SK-N-SH (cell line): ENCODE measurements at regions of chr16 and their contacts with region 1.

Region 1: DNA sequence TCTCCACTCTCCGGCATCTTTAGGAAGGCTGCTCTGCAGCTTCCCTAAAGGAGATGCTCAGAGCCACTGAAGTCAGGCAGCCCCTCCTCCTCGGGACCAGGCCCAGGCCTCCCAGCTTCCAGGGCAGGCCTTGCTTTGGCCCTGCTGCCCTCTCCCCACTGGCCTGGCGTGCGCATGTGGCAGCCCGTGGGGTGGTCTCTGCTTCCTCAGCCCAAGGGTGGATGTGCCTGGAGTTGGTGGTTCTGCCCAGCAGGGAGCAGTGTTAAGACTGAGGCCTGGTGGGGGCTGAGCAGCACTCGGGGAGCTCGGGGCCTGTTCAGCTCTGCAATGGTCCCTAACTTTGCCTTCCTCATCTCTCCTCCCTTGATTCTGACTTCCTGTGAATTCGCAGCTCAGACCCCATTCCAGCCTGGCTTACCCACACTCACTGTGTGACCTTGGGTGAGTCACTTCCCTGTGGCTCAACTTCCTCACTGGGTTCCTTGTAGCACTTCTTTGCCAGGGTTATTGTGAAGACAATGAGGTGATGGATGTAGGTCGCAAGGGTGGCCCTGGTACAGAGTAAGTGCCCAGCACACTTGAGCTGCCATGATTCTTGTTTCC is 63.2 kb downstream of the NKD1 start:
- DNase-seq: no peak
- H3K4me3 ChIP-seq: no peak overlapping the region
- H3K27ac ChIP-seq: no peak overlapping the region
- H3K4me1 ChIP-seq: peaks cover 0 to 15% of the 10 kb centered on the region in 2 experiments; a peak in 2 of 4 replicates
- H3K27me3 ChIP-seq: no peaks in the 10 kb centered on the region
- CTCF ChIP-seq: no peak
- EP300 ChIP-seq: no peak
- RAD21 ChIP-seq: no peak

Region 2: GRCh38 chr16:50600582-50601283 is 10.7 kb before region 1 on chr16:
- CTCF ChIA-PET with region 1: interaction called, 10 read pairs
- POLR2A ChIA-PET with region 1: no interaction called
- DNase-seq: no peak
- H3K4me3 ChIP-seq: no peak overlapping the region
- H3K27ac ChIP-seq: no peak overlapping the region
- H3K4me1 ChIP-seq: peaks cover 0 to 34% of the 10 kb centered on the region in 2 experiments; a peak in 1 of 4 replicates
- H3K27me3 ChIP-seq: no peaks in the 10 kb centered on the region
- CTCF ChIP-seq: no peak
- EP300 ChIP-seq: no peak
- RAD21 ChIP-seq: no peak